Natural killer cell (primary cell): ENCODE measurements at regions of chr2 and their contacts with region 1.

Region 1: GRCh38 chr2:165743442-165743841 is 50.6 kb downstream of the GALNT3 start:
- DNase-seq: no peak
- ATAC-seq: peak in 1 of 3 donors; percentile 21
- H3K4me3 ChIP-seq: no peak overlapping the region
- H3K4me3 Mint-ChIP-seq: no peak overlapping the region
- H3K27ac ChIP-seq: no peak overlapping the region
- H3K27ac Mint-ChIP-seq: peak overlapping the region; percentile 43 to 59
- H3K4me1 ChIP-seq: no peaks in the 10 kb centered on the region
- H3K4me1 Mint-ChIP-seq: peaks cover 8 to 10% of the 10 kb centered on the region in 2 donors
- H3K27me3 ChIP-seq: no peaks in the 10 kb centered on the region
- H3K27me3 Mint-ChIP-seq: no peaks in the 10 kb centered on the region
- CTCF ChIP-seq: no peak

Region 2: DNA sequence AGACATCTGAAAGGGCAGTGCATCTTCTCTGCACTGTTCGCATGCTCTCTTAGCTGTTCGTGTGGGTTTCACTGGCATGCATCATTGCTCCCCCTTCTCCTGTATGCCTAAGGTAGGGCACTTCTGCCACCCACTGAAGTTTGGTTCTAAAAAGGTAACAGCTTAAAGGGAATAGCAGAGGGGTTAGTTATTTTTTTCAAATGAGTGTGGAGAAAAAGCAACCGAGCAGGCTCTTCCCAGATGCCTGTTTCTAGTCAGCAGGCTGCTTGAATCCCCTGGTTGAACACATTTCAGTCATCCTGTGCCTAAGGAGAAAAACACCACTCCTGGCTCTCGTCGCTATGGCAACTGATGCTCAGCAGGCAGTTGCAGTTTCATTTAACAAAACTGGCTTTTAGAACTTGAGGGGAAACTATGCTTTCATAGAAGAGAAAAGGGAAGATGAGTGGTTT is 120.4 kb after region 1 on chr2:
- intact Hi-C with region 1: loop called (anchors 10 kb)
- DNase-seq: no peak
- ATAC-seq: no peak
- H3K4me3 ChIP-seq: no peak overlapping the region
- H3K4me3 Mint-ChIP-seq: no peak overlapping the region
- H3K27ac ChIP-seq: no peak overlapping the region
- H3K27ac Mint-ChIP-seq: no peak overlapping the region
- H3K4me1 ChIP-seq: no peaks in the 10 kb centered on the region
- H3K4me1 Mint-ChIP-seq: peaks cover 0 to 3% of the 10 kb centered on the region in 2 donors
- H3K27me3 ChIP-seq: no peaks in the 10 kb centered on the region
- H3K27me3 Mint-ChIP-seq: no peaks in the 10 kb centered on the region
- CTCF ChIP-seq: no peak